Activated CD4-positive, alpha-beta memory T cell treated with anti-CD3 and anti-CD28 coated beads, Interleukin-2, amount 10 ng/mL, durations not matched to agents 7 days and 5 days (primary cell): ENCODE measurements at regions of chrX and their contacts with region 1.

Region 1: GRCh38 chrX:119606280-119607015 is at the start of gene NKRF:
- DNase-seq: peak; percentile 92
- H3K4me3 Mint-ChIP-seq: peak within 1 kb of the TSS; percentile 92
- H3K27ac Mint-ChIP-seq: peak within 1 kb of the TSS; percentile 90
- H3K4me1 Mint-ChIP-seq: peaks cover 42% of the 10 kb centered on the region
- H3K27me3 Mint-ChIP-seq: peaks cover 9% of the 10 kb centered on the region
- total RNA-seq, gene NKRF: 13.8 to 14.7 TPM

Region 2: DNA sequence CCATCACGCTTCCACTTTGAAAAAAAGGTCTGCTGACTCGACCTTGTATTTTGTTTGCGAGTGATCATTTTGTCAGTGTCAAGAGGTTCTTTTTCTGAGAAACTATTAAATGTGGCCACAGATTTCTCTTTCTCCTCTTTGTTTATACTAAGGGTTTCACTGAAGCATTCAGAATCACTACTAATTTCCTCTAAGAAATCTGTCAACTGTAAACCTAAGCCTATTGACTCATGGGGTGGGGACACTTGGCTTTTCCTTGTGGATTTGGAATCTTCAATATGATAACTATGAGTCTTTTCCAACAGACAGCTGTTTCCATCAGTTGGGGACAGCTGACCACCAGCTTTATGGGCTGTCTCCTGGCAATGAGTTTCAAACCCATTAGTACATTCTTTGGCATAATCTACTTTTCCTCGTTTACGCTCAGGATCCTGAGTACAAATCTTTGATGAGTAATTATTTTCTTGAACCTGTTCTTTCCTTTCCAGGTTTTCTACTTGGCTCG is 356.6 kb before region 1 on chrX:
- CTCF ChIA-PET with region 1: no interaction called
- POLR2A ChIA-PET with region 1: no interaction called
- DNase-seq: no peak
- H3K4me3 Mint-ChIP-seq: no peak overlapping the region
- H3K27ac Mint-ChIP-seq: no peak overlapping the region
- H3K4me1 Mint-ChIP-seq: peaks cover 3% of the 10 kb centered on the region
- H3K27me3 Mint-ChIP-seq: no peaks in the 10 kb centered on the region

Region 3: GRCh38 chrX:119574394-119575266 is 31.8 kb before region 1 on chrX and contains the start of gene UBE2A:
- CTCF ChIA-PET with region 1: no interaction called
- POLR2A ChIA-PET with region 1: interaction called, 15 read pairs
- DNase-seq: peak; percentile 88
- H3K4me3 Mint-ChIP-seq: peak within 1 kb of the TSS; percentile 93
- H3K27ac Mint-ChIP-seq: peak within 1 kb of the TSS; percentile 81
- H3K4me1 Mint-ChIP-seq: peaks cover 30% of the 10 kb centered on the region
- H3K27me3 Mint-ChIP-seq: no peaks in the 10 kb centered on the region
- total RNA-seq, gene UBE2A: 76.2 to 79.6 TPM